GM12878 (cell line): ENCODE measurements at regions of chrX and their contacts with region 1.

Region 1: GRCh38 chrX:19811807-19812604 is 75.4 kb downstream of the SH3KBP1 start:
- DNase-seq: no peak
- ATAC-seq: peak; percentile 41
- H3K4me3 ChIP-seq: no peak overlapping the region
- H3K27ac ChIP-seq: peak overlapping the region; percentile 87
- H3K4me1 ChIP-seq: peaks cover 30% of the 10 kb centered on the region
- H3K27me3 ChIP-seq: no peaks in the 10 kb centered on the region
- CTCF ChIP-seq: no peak
- EP300 ChIP-seq: no peak
- POLR2A ChIP-seq: no peak
- RAD21 ChIP-seq: no peak

Region 2: GRCh38 chrX:18833071-18833731 is 978.8 kb before region 1 on chrX:
- CTCF ChIA-PET with region 1: no interaction called
- POLR2A ChIA-PET with region 1: interaction called, 14 read pairs
- RAD21 ChIA-PET with region 1: no interaction called
- SMC1A ChIA-PET with region 1: no interaction called
- in situ Hi-C with region 1: no loop called
- intact Hi-C with region 1: no loop called
- DNase-seq: no peak
- ATAC-seq: no peak
- H3K4me3 ChIP-seq: no peak overlapping the region
- H3K27ac ChIP-seq: no peak overlapping the region
- H3K4me1 ChIP-seq: no peaks in the 10 kb centered on the region
- H3K27me3 ChIP-seq: no peaks in the 10 kb centered on the region
- CTCF ChIP-seq: no peak
- EP300 ChIP-seq: no peak
- POLR2A ChIP-seq: no peak
- RAD21 ChIP-seq: no peak

Region 3: GRCh38 chrX:19715711-19716638 is 96.0 kb before region 1 on chrX:
- CTCF ChIA-PET with region 1: no interaction called
- POLR2A ChIA-PET with region 1: no interaction called
- RAD21 ChIA-PET with region 1: no interaction called
- SMC1A ChIA-PET with region 1: no interaction called
- in situ Hi-C with region 1: no loop called
- intact Hi-C with region 1: no loop called
- DNase-seq: no peak
- ATAC-seq: no peak
- H3K4me3 ChIP-seq: no peak overlapping the region
- H3K27ac ChIP-seq: no peak overlapping the region
- H3K4me1 ChIP-seq: no peaks in the 10 kb centered on the region
- H3K27me3 ChIP-seq: no peaks in the 10 kb centered on the region
- CTCF ChIP-seq: no peak
- EP300 ChIP-seq: no peak
- POLR2A ChIP-seq: no peak
- RAD21 ChIP-seq: no peak

Region 4: GRCh38 chrX:19791562-19791961 is 20.4 kb before region 1 on chrX:
- CTCF ChIA-PET with region 1: interaction called, 3 read pairs
- POLR2A ChIA-PET with region 1: interaction called, 8 read pairs
- RAD21 ChIA-PET with region 1: interaction called, 5 read pairs
- SMC1A ChIA-PET with region 1: interaction called, 52 read pairs
- in situ Hi-C with region 1: no loop called
- intact Hi-C with region 1: no loop called
- DNase-seq: no peak
- ATAC-seq: peak; percentile 76
- H3K4me3 ChIP-seq: 0 out of 2 replicates have a peak overlapping the region, but pooled peaks have one; percentile 11
- H3K27ac ChIP-seq: peak overlapping the region; percentile 69
- H3K4me1 ChIP-seq: peaks cover 17% of the 10 kb centered on the region
- H3K27me3 ChIP-seq: no peaks in the 10 kb centered on the region
- CTCF ChIP-seq: no peak
- EP300 ChIP-seq: no peak
- POLR2A ChIP-seq: no peak
- RAD21 ChIP-seq: no peak

Region 5: DNA sequence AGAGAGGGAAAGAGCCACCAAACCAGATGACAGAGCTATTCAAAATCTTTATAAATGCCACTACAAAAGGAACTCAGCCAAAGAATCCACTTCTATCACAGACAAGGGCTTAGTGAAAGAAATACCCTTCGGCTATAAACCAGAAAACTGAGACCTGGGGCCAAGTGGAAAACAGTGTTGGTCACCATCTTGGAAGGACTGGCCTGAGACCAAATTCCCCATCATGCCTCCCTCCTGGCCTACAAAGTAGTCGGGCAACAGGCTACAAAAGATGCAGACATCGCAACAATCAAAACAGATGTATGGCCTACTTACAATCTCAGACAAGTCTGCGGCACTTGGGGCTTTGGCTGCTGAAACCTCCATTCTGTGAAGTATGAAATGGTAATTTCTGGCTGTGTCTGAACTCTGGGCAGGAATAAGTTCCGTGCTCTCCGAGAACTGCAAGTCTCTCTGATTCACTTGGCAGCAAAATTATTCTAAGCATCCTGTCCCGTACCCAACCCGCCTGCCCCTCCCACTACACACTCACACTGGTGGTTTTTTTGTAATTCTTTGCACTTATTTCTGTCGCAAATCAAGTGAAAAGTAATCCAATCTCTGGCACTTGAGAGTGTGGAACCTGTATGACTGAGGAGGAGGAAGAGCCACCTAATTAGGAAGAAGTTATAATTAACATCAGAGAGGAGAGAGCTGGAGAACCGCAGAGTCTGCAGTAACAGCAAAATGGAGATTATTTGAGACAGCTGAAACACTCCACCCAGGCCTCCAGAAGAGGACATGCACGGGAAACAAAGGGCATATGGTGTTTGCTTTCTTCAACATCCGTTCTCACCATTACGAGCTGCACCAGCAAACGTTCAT is 12.5 kb before region 1 on chrX:
- CTCF ChIA-PET with region 1: no interaction called
- POLR2A ChIA-PET with region 1: interaction called, 12 read pairs
- RAD21 ChIA-PET with region 1: interaction called, 8 read pairs
- SMC1A ChIA-PET with region 1: interaction called, 52 read pairs
- in situ Hi-C with region 1: no loop called
- intact Hi-C with region 1: no loop called
- DNase-seq: no peak
- ATAC-seq: no peak
- H3K4me3 ChIP-seq: peak overlapping the region; percentile 8; the same call in 1 of the 2 replicates
- H3K27ac ChIP-seq: peak overlapping the region; percentile 73
- H3K4me1 ChIP-seq: peaks cover 19% of the 10 kb centered on the region
- H3K27me3 ChIP-seq: no peaks in the 10 kb centered on the region
- CTCF ChIP-seq: no peak
- EP300 ChIP-seq: no peak
- POLR2A ChIP-seq: no peak
- RAD21 ChIP-seq: no peak

Region 6: DNA sequence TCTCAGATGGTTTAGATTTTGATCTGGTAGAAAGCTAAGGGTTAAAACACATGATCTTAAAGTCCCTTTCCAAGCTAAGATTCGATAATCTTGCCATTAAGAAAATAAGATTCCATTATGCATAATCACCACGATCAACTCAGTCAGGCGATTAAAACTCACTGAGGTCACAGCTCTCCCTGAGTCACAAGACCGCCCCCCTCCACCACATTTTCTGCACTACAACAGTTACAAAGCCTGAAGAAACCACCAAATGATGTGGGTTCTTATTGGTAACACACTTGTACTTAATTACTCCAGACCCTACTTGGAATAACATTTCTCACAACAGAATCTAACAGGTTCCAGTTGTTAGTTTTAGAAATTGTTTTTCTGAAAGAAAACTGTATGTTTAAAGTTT is 12.6 kb after region 1 on chrX:
- CTCF ChIA-PET with region 1: interaction called, 11 read pairs
- POLR2A ChIA-PET with region 1: interaction called, 12 read pairs
- RAD21 ChIA-PET with region 1: interaction called, 4 read pairs
- SMC1A ChIA-PET with region 1: interaction called, 12 read pairs
- in situ Hi-C with region 1: no loop called
- intact Hi-C with region 1: no loop called
- DNase-seq: no peak
- ATAC-seq: peak; percentile 57
- H3K4me3 ChIP-seq: no peak overlapping the region
- H3K27ac ChIP-seq: no peak overlapping the region
- H3K4me1 ChIP-seq: no peaks in the 10 kb centered on the region
- H3K27me3 ChIP-seq: no peaks in the 10 kb centered on the region; a peak in 1 of 4 replicates
- CTCF ChIP-seq: no peak
- EP300 ChIP-seq: no peak
- POLR2A ChIP-seq: no peak
- RAD21 ChIP-seq: no peak

Region 7: GRCh38 chrX:19846995-19847790 is 35.2 kb after region 1 on chrX:
- CTCF ChIA-PET with region 1: no interaction called
- POLR2A ChIA-PET with region 1: interaction called, 6 read pairs
- RAD21 ChIA-PET with region 1: interaction called, 12 read pairs
- SMC1A ChIA-PET with region 1: interaction called, 10 read pairs
- in situ Hi-C with region 1: no loop called
- intact Hi-C with region 1: loop called (anchors 5 kb)
- DNase-seq: no peak
- ATAC-seq: peak; percentile 55
- H3K4me3 ChIP-seq: 0 out of 2 replicates have a peak overlapping the region, but pooled peaks have one; percentile 8
- H3K27ac ChIP-seq: peak overlapping the region; percentile 79
- H3K4me1 ChIP-seq: peaks cover 38% of the 10 kb centered on the region
- H3K27me3 ChIP-seq: no peaks in the 10 kb centered on the region
- CTCF ChIP-seq: no peak
- EP300 ChIP-seq: no peak
- POLR2A ChIP-seq: no peak
- RAD21 ChIP-seq: no peak

Region 8: GRCh38 chrX:19855700-19856381 is 43.8 kb after region 1 on chrX:
- CTCF ChIA-PET with region 1: no interaction called
- POLR2A ChIA-PET with region 1: interaction called, 12 read pairs
- RAD21 ChIA-PET with region 1: interaction called, 20 read pairs
- SMC1A ChIA-PET with region 1: interaction called, 12 read pairs
- in situ Hi-C with region 1: no loop called
- intact Hi-C with region 1: no loop called
- DNase-seq: no peak
- ATAC-seq: peak; percentile 36
- H3K4me3 ChIP-seq: no peak overlapping the region
- H3K27ac ChIP-seq: peak overlapping the region; percentile 88
- H3K4me1 ChIP-seq: peaks cover 21% of the 10 kb centered on the region
- H3K27me3 ChIP-seq: no peaks in the 10 kb centered on the region
- CTCF ChIP-seq: no peak
- EP300 ChIP-seq: no peak
- POLR2A ChIP-seq: no peak
- RAD21 ChIP-seq: no peak

Region 9: GRCh38 chrX:20011608-20012007 is 199.6 kb after region 1 on chrX:
- CTCF ChIA-PET with region 1: no interaction called
- POLR2A ChIA-PET with region 1: no interaction called
- RAD21 ChIA-PET with region 1: no interaction called
- SMC1A ChIA-PET with region 1: no interaction called
- in situ Hi-C with region 1: no loop called
- intact Hi-C with region 1: no loop called
- DNase-seq: no peak
- ATAC-seq: no peak
- H3K4me3 ChIP-seq: no peak overlapping the region
- H3K27ac ChIP-seq: no peak overlapping the region
- H3K4me1 ChIP-seq: no peaks in the 10 kb centered on the region
- H3K27me3 ChIP-seq: no peaks in the 10 kb centered on the region
- CTCF ChIP-seq: no peak
- EP300 ChIP-seq: no peak
- POLR2A ChIP-seq: no peak
- RAD21 ChIP-seq: no peak